Right ventricle myocardium inferior (tissue), 1 donor: ENCODE measurements at regions of chr5 and their contacts with region 1.

Region 1: DNA sequence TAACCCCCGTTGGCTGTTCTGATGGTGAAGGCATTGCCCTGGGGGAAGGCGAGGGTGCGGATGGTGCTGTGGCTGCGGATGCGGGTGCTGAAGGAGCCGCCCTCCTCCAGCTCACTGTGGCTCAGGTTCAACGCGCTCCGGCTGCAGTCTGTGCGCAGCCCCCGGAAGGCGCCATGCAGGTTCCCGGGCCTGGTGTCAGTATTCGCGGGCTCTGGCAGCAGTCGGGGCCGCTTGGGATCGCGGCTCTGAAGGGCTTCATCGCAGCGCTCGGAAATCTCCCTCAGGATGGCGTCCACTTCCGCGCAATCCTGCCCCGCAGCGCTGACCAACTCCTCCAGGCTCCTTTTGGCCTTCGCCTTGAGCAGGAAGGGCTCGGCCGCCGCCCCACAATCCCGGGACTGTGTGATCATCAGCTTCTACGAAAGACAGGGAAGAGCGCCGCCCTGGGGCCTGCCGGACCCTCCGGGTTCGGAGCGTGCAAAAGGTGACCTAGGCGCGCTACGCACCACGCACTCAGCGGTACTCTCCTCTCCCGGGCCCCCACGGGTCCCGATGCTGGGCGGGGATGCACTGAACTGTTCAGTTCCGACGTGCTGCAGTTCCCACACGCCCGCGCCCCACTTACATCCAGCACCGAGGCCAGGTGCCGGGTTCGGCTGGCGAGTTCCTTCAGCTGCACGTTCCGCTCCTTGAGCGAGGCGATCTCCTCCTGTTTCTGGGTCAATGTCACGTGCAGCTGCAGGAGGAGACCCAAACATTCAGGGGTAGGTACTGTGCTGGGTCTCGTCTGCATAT is 6.5 kb downstream of the MCIDAS start:
- DNase-seq: no peak
- ATAC-seq: no peak

Region 2: DNA sequence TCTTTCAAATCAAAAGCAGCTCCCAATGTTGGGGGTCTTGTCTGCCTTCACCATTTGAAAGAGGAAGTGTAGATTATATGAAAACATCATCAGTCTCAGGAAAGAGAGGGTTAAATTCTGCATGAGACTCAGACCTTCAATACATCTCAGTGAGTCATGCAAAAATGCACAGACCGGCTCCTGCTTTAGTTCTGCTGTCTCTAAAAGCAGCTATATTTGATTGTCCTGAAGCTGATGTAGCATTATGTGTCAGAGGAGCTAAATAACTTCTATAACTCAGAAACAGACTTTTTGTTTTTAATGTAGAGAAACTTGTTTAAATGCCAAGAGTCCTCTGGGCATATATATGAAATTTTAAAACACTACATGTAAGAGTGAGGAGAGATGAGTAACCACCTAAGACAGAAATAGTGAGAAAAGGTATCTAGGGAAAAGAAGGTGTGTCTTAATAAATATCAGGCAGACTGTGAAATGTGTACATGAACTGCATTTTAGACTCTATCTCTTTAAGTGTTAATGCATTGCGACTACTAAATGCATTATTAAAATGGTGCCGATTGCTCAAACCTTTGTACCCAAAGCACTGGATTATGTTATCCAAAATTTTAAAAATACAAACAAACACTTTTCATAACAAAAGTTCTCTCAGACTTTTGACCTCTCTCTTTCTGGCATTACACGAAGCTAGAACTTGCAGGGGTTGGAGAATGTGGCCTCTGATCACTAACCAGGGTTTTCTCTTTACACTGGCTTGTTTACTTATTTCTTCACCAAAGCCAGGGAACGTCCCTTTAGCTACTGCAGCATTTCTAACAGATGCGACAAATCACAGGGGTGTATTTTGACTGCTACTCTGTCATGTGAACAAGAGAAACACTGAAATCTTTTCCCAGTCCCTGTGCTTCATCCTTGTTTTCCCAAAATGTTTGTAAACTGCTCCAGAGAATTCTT is 1212.5 kb before region 1 on chr5:
- intact Hi-C with region 1: no loop called
- DNase-seq: no peak
- ATAC-seq: peak; percentile 57

Region 3: DNA sequence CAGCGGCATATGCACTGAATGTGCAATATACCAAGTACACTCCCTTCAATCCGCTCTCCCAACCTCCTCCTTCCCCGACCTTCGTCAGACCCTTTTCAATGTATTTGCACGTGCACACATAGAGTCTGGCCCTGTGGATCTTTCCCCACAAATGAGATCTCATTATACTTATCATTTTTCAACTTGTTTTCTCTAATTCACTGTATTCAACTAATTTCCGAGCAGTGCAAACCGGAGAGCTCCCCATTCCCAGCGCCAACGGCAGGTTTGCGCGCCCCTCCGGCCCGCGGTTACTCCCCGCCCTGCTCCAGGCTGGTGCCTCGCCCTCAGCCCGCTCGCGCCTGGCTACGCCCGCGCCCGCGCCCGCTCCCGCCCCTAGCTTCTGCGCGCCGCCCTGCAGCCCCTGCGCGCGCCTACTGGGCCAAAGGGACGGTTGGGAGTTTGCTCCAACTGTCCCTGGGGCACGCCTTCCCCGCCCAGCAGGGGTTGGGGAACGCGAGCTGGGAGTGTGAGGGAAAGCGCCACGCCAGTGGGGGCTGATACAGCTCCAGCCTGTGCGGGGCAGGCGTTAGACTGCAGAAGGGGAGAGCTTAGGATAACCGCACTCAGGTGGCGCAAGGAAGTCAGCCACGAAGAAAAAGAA is 44.3 kb before region 1 on chr5:
- intact Hi-C with region 1: loop called (anchors 5 kb)
- DNase-seq: peak; percentile 65
- ATAC-seq: peak; percentile 45

Region 4: GRCh38 chr5:55364537-55365055 is 144.0 kb after region 1 on chr5:
- intact Hi-C with region 1: no loop called
- DNase-seq: no peak
- ATAC-seq: no peak